CD4-positive, alpha-beta T cell (primary cell): ENCODE measurements at regions of chr15 and their contacts with region 1.

Region 1: GRCh38 chr15:72319985-72320671 is at the start of gene CELF6:
- DNase-seq: peak; percentile 32 to 93 (median 64)
- ATAC-seq: peak; percentile 79
- H3K4me3 ChIP-seq: peak within 1 kb of the TSS; percentile 55
- H3K4me3 Mint-ChIP-seq: peak within 1 kb of the TSS; percentile 85
- H3K27ac ChIP-seq: no peak within 1 kb of the TSS
- H3K27ac Mint-ChIP-seq: peak within 1 kb of the TSS; percentile 74
- H3K4me1 ChIP-seq: peaks cover 18% of the 10 kb centered on the region
- H3K4me1 Mint-ChIP-seq: peaks cover 26% of the 10 kb centered on the region
- H3K27me3 ChIP-seq: no peaks in the 10 kb centered on the region
- H3K27me3 Mint-ChIP-seq: no peaks in the 10 kb centered on the region
- CTCF ChIP-seq: no peak
- total RNA-seq, gene CELF6: 2.4 TPM

Region 2: DNA sequence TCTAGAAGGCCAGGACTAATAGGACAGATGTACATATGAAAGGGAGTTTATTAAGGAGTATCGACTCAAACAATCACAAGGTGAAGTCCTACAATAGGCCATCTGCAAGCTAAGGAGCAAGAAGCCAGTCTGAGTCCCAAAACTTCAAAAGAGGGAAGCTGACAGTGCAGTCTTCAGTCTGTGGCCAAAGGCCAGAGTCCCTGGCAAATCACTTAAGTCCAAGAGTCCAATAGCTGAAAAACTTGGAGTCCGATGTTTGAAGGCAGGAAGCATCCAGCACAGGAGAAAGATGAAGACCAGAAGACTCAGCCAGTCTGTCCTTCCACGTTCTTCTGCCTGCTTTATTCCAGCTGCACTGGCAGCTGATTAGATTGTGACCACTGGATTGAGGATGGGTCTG is 10.9 kb after region 1 on chr15:
- CTCF ChIA-PET with region 1: no interaction called
- POLR2A ChIA-PET with region 1: interaction called, 3 read pairs
- intact Hi-C with region 1: loop called in 1 of 2 experiments (anchors 1 kb)
- DNase-seq: no peak
- ATAC-seq: no peak
- H3K4me3 ChIP-seq: no peak overlapping the region
- H3K4me3 Mint-ChIP-seq: no peak overlapping the region
- H3K27ac ChIP-seq: no peak overlapping the region
- H3K27ac Mint-ChIP-seq: no peak overlapping the region
- H3K4me1 ChIP-seq: no peaks in the 10 kb centered on the region
- H3K4me1 Mint-ChIP-seq: no peaks in the 10 kb centered on the region
- H3K27me3 ChIP-seq: no peaks in the 10 kb centered on the region
- H3K27me3 Mint-ChIP-seq: no peaks in the 10 kb centered on the region
- CTCF ChIP-seq: no peak